ENCODE measurements at regions of chr15 and their contacts with region 1.

Region 1: GRCh38 chr15:68154923-68155559 is 50.1 kb downstream of the CALML4 start:
- DNase-seq: peak; percentile 71
- ATAC-seq: 0 out of 2 replicates have a peak, but pooled peaks have one; percentile 35
- H3K4me3 ChIP-seq: no peak overlapping the region
- H3K27ac ChIP-seq: no peak overlapping the region
- H3K4me1 ChIP-seq: no peaks in the 10 kb centered on the region
- H3K27me3 ChIP-seq: no peaks in the 10 kb centered on the region
- CTCF ChIP-seq: peak; percentile 87

Region 2: GRCh38 chr15:67839929-67840748 is 314.9 kb before region 1 on chr15 and contains the start of gene RNU6-1:
- CTCF ChIA-PET with region 1: no interaction called
- POLR2A ChIA-PET with region 1: no interaction called
- intact Hi-C with region 1: loop called (anchors 5 kb)
- DNase-seq: peak; percentile 84
- ATAC-seq: peak; percentile 62
- H3K4me3 ChIP-seq: peak within 1 kb of the TSS; percentile 96
- H3K27ac ChIP-seq: peak within 1 kb of the TSS; percentile 29
- H3K4me1 ChIP-seq: peaks cover 17% of the 10 kb centered on the region
- H3K27me3 ChIP-seq: peaks cover 9% of the 10 kb centered on the region
- CTCF ChIP-seq: no peak
- total RNA-seq, gene RNU6-1: not detected in 2 replicates

Region 3: GRCh38 chr15:67863442-67863987 is 291.5 kb before region 1 on chr15:
- CTCF ChIA-PET with region 1: interaction called, 4 read pairs
- POLR2A ChIA-PET with region 1: no interaction called
- intact Hi-C with region 1: loop called (anchors 5 kb)
- DNase-seq: peak; percentile 74
- ATAC-seq: peak; percentile 84
- H3K4me3 ChIP-seq: peak overlapping the region; percentile 73
- H3K27ac ChIP-seq: no peak overlapping the region
- H3K4me1 ChIP-seq: peaks cover 18% of the 10 kb centered on the region
- H3K27me3 ChIP-seq: no peaks in the 10 kb centered on the region
- CTCF ChIP-seq: peak; percentile 82

Region 4: GRCh38 chr15:67998599-67999122 is 156.4 kb before region 1 on chr15:
- CTCF ChIA-PET with region 1: no interaction called
- POLR2A ChIA-PET with region 1: no interaction called
- intact Hi-C with region 1: loop called (anchors 1 kb)
- DNase-seq: peak; percentile 85
- ATAC-seq: peak; percentile 62
- H3K4me3 ChIP-seq: peak overlapping the region; percentile 8; the same call in 1 of the 2 replicates
- H3K27ac ChIP-seq: peak overlapping the region; percentile 88
- H3K4me1 ChIP-seq: peaks cover 25% of the 10 kb centered on the region
- H3K27me3 ChIP-seq: no peaks in the 10 kb centered on the region
- CTCF ChIP-seq: no peak

Region 5: DNA sequence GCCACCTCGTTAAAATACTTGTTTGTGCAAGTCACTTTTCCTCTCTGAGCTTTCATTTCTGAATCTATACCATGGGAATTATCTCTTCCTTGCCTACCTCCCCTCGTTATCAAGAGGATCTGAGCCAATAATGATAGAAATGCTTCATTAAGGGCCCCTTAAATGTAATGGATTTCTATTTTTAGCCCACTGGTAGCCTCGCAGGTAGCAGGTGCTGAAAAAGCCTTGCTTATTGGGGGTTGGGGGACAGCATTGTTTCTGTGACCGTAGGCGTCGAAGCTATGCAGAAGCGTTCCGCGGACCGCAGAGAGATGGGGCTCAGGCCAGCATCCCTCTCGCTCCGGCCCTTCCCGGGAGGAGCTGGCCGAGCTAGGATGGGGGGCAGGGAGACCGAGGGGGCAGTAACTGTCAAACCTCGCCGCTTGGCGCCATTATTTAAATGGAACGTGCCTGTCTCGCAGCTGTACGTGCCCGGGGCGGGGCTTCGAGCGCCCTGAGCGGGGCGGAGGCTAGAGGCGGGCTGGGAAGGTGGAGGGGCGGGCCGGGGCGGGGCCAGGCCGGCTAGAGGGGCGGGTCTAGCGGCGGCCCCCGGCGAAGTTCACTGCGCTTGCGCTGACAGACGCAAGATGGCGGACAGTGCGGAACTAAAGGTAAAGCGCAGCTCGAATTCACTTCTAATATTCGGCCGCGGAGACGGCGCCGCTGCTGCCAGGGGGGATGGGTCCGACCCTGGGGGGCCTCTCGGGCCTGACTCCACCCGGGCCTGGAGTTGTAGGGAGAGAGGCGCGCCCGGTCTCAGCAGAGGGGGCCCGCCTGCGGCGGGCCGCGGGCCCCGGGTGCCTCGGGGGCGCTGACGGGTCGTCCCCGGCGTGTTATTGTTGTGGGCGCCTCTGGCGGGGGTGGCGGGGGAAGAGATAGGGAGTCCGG is 101.1 kb before region 1 on chr15 and contains the start of gene PIAS1:
- CTCF ChIA-PET with region 1: no interaction called
- POLR2A ChIA-PET with region 1: no interaction called
- intact Hi-C with region 1: loop called (anchors 5 kb)
- DNase-seq: peak; percentile 86
- ATAC-seq: peak; percentile 92
- H3K4me3 ChIP-seq: peak within 1 kb of the TSS; percentile 93
- H3K27ac ChIP-seq: no peak within 1 kb of the TSS
- H3K4me1 ChIP-seq: peaks cover 24% of the 10 kb centered on the region
- H3K27me3 ChIP-seq: no peaks in the 10 kb centered on the region
- CTCF ChIP-seq: no peak
- total RNA-seq, gene PIAS1: 13.8 and 21.9 TPM in 2 replicates

Region 6: DNA sequence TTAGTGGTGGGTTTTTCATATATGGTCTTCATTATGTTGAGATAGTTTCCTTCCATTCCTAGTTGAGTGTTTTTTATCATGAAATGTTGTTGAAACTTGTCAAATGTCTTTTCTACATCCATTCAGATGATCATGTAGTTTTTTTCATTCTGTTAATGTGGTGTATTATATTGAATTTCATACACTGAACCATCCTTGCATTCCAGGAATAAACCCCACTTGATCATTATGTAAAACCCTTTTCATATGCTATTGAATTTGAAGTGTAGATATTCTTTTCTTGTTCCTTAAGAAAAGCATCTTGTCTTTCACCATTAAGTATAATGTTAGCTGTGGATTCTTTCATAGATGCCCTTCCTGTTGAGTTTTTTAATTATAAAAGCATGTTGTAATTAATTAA is 58.0 kb before region 1 on chr15:
- CTCF ChIA-PET with region 1: no interaction called
- POLR2A ChIA-PET with region 1: no interaction called
- intact Hi-C with region 1: loop called (anchors 10 kb)
- DNase-seq: no peak
- ATAC-seq: no peak
- H3K4me3 ChIP-seq: no peak overlapping the region
- H3K27ac ChIP-seq: no peak overlapping the region
- H3K4me1 ChIP-seq: peaks cover 4% of the 10 kb centered on the region
- H3K27me3 ChIP-seq: no peaks in the 10 kb centered on the region
- CTCF ChIP-seq: no peak